ENCODE measurements at regions of chr17 and their contacts with region 1.

Region 1: DNA sequence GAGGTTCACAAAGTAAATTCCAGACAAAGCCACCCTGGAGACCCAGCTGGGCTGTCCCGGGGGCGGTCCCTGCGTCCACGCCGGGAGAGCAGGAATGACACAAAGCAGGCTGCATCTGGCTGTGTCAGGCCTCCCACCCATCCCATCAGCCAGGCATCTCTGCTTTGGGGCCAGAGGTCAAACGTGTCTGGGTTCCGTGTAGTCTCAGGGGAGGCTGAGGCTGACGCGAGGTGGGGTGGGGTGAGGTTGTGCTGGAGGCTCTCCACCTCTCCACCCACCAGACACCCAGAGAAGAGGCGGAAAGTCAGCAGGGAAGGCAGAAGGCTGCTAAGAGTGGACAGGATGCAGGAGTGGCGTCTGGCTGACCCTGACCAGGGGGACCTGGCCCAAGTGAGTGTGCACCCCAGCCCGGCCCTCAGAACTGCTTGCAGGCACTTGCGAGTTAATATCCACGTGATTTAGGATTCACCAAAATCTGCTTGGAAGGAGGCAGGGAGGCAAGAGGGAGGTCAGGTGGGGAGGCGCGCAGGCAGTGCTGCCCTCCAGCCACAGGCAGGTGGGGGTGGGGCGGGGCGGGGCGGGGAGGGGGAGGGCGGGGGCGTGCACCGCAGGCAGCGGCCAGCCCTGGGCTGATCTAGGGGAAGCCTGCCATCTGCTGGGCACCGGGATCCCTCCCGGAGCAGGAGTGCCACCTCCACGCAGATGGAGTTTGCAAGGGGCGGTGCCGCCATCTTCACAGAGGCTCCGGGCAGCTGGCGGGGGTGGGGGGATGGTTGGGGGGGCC is 44.3 kb downstream of the TBC1D16 start:
- DNase-seq: peak; percentile 79 to 81 (median 80)
- H3K4me3 ChIP-seq: peak overlapping the region in 1 of 2 donors; percentile 62
- H3K4me3 Mint-ChIP-seq: peak overlapping the region; percentile 48 to 88 (median 78)
- H3K27ac ChIP-seq: no peak overlapping the region
- H3K27ac Mint-ChIP-seq: peak overlapping the region in 2 of 7 donors; percentile 74 to 85
- H3K4me1 ChIP-seq: peaks cover 34% of the 10 kb centered on the region
- H3K4me1 Mint-ChIP-seq: peaks cover 15 to 45% (median 32%) of the 10 kb centered on the region in 4 donors
- H3K27me3 ChIP-seq: no peaks in the 10 kb centered on the region
- H3K27me3 Mint-ChIP-seq: no peaks in the 10 kb centered on the region

Region 2: DNA sequence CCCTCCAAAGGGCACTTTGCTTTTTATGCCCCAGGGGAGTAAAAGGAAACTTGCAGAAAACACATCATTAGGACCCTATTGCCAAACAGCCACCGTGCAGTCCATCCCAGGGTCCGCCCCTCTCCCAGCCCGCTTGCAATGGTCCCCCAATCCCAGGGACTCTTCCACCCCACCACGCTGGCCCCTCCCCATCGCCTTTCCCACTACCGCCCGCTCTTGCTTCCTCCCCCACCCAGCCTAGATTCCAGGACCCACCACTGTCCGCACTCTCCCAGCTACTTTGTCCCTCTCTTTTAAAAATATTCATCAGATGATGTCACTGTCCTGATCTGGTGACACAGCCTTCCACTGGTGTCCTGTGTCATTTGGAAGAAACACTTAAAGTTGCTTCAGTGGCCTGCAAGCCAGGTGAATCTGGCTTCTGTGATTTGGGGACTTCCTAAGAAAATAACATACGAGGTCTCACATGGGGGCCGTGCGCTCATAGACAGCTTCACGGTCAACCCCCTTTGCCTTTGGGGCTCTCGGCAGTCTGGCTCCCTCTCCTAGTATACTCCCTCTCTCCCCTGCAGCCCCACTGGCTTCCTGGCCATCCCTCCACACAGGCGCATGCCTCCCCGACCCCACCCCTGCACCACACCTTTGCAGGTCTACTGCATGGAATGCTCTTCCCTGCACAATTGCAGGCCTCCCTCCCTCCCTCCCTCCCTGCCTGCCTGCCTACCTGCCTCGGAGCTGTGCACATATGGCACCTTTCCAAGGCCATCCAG is 508.4 kb before region 1 on chr17:
- CTCF ChIA-PET with region 1: no interaction called
- POLR2A ChIA-PET with region 1: no interaction called
- intact Hi-C with region 1: no loop called
- DNase-seq: no peak
- H3K4me3 ChIP-seq: no peak overlapping the region
- H3K4me3 Mint-ChIP-seq: no peak overlapping the region
- H3K27ac ChIP-seq: no peak overlapping the region
- H3K27ac Mint-ChIP-seq: no peak overlapping the region
- H3K4me1 ChIP-seq: no peaks in the 10 kb centered on the region
- H3K4me1 Mint-ChIP-seq: no peaks in the 10 kb centered on the region
- H3K27me3 ChIP-seq: no peaks in the 10 kb centered on the region
- H3K27me3 Mint-ChIP-seq: peaks cover 37 to 50% of the 10 kb centered on the region in 2 donors

Region 3: DNA sequence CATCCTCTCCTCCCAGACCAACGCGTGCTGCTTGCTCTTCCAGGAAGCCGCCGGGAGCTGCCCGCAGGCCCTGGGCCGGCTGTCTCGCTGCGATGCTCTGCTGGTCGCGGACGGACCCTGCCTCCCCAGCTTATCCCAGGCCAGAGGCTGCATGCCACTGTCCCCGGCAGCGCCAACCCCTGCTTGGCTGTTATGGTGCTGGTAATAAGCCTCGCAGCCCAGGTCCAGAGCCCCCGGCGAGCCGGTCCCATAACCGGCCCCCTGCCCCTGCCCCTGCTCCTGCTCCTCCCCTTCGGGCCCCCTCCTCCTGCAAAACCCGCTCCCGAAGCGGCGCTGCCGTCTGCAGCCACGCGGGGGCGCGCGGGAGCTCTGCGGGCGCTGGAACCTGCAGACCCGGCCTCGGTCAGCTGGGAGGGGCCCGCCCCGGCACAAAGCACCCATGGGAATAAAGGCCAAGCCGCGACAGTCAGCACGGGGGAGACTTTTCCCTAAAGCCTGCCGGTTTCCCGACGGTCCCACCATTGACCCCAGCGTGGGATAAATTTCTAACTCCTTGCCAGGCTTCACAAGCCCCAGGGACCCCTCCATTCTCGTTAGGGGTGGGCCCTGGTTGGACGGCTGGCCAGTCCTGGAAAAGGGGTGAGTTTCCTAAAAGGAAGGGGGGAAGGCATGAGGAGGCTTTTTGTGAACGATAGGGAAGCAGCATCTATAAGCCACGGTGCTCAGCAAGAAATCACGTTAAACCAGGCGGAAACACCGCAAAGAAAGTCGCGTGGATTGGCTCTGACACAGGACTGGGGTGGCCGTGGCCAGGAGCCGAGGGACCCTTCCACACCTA is 249.4 kb before region 1 on chr17:
- CTCF ChIA-PET with region 1: interaction called, 18 read pairs
- POLR2A ChIA-PET with region 1: no interaction called
- intact Hi-C with region 1: loop called (anchors 1 kb)
- DNase-seq: peak in 4 of 5 donors; percentile 65 to 76 (median 67)
- H3K4me3 ChIP-seq: no peak overlapping the region
- H3K4me3 Mint-ChIP-seq: peak overlapping the region in 1 of 8 donors; percentile 26
- H3K27ac ChIP-seq: no peak overlapping the region
- H3K27ac Mint-ChIP-seq: peak overlapping the region in 1 of 7 donors; percentile 13
- H3K4me1 ChIP-seq: peaks cover 16% of the 10 kb centered on the region
- H3K4me1 Mint-ChIP-seq: peaks cover 4 to 19% (median 9%) of the 10 kb centered on the region in 4 donors
- H3K27me3 ChIP-seq: peaks cover 13% of the 10 kb centered on the region
- H3K27me3 Mint-ChIP-seq: peaks cover 24 to 33% of the 10 kb centered on the region in 2 donors

Region 4: DNA sequence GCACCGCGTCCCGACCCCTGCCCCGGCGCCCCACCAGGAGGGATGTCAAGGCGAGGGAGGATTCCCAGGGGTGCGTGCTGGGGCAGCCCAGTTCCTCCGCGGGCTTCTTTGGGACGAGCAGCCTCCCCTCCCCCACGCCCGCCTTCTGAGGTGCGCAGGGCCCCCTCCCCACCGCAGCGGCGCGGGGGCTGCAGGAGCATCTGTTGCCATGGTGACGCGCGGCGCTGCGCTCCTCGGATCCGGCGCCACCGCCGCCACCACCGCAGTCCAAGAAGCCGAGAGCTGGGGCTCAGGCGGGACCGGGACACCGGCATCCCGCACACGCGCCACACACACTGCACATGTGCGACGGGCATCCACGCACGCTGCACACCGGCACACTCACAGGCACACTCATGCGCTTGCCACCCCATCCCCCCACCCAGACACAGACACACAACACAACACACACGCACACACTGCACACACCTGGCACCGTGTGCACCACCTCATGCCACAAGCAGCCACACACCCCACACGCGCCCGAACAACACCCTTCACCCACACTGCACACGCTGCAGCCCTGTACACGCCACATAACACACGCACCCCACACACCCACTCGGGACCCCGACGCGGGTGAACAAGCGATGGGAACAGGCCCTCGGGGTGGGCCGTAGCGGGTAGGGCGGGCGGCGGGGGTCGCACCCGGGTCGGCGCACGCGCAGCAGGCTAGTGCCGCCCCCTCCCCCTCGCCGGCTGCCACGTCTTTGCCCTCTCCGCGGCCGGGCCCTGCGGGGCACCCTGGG is 243.6 kb before region 1 on chr17:
- CTCF ChIA-PET with region 1: interaction called, 18 read pairs
- POLR2A ChIA-PET with region 1: no interaction called
- intact Hi-C with region 1: loop called (anchors 1 kb)
- DNase-seq: no peak
- H3K4me3 ChIP-seq: no peak overlapping the region
- H3K4me3 Mint-ChIP-seq: peak overlapping the region in 6 of 8 donors; percentile 12 to 75 (median 58)
- H3K27ac ChIP-seq: no peak overlapping the region
- H3K27ac Mint-ChIP-seq: no peak overlapping the region
- H3K4me1 ChIP-seq: peaks cover 21% of the 10 kb centered on the region
- H3K4me1 Mint-ChIP-seq: peaks cover 7 to 27% (median 12%) of the 10 kb centered on the region in 4 donors
- H3K27me3 ChIP-seq: peaks cover 16% of the 10 kb centered on the region
- H3K27me3 Mint-ChIP-seq: peaks cover 25 to 38% of the 10 kb centered on the region in 2 donors

Region 5: DNA sequence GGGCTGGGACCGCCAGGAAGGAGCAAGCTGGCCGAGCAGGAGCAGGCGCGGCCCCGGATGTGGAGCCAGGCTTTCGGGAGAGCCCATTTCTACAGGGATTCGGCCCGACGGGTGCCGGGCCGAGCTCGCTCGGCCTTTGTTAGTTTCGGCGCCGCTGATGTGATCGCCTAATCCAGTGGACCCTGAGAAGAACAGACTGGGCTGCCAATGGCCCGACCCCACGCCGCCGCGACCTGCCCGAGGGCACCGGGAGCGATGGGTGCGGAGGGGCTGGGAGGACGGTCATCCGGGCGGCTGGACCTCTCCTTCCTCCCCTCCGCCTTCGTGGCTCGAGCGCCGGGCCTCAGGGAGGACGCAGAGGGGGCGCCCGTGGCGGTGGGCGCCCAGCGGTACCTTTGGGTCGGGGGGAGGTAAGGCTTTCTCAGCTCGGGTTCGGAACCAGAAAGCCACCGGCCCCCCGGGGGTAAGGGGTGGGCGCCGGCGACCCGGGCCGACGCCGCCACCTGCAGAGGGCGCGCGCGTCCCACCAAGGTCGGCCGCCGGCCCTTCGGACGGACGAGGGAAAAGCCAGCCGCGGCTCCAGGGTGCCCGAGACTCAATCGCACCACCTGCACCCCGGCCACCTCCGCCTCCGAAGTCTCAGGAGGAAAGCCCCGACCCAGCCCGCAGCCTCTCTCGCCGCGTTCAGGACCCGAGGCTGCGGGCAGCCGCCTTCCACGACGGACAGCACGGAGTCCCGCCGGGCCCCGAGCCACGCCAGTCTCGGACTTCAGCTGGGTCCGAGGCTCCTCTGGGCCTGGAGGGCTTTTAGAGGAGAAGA is 201.6 kb before region 1 on chr17:
- CTCF ChIA-PET with region 1: interaction called, 8 read pairs
- POLR2A ChIA-PET with region 1: no interaction called
- intact Hi-C with region 1: loop called (anchors 1 kb)
- DNase-seq: no peak
- H3K4me3 ChIP-seq: no peak overlapping the region
- H3K4me3 Mint-ChIP-seq: peak overlapping the region in 2 of 8 donors; percentile 10 to 36
- H3K27ac ChIP-seq: no peak overlapping the region
- H3K27ac Mint-ChIP-seq: peak overlapping the region in 1 of 7 donors; percentile 63
- H3K4me1 ChIP-seq: peaks cover 25% of the 10 kb centered on the region
- H3K4me1 Mint-ChIP-seq: peaks cover 2 to 16% (median 7%) of the 10 kb centered on the region in 4 donors
- H3K27me3 ChIP-seq: peaks cover 23% of the 10 kb centered on the region
- H3K27me3 Mint-ChIP-seq: peaks cover 29 to 41% of the 10 kb centered on the region in 2 donors

Region 6: DNA sequence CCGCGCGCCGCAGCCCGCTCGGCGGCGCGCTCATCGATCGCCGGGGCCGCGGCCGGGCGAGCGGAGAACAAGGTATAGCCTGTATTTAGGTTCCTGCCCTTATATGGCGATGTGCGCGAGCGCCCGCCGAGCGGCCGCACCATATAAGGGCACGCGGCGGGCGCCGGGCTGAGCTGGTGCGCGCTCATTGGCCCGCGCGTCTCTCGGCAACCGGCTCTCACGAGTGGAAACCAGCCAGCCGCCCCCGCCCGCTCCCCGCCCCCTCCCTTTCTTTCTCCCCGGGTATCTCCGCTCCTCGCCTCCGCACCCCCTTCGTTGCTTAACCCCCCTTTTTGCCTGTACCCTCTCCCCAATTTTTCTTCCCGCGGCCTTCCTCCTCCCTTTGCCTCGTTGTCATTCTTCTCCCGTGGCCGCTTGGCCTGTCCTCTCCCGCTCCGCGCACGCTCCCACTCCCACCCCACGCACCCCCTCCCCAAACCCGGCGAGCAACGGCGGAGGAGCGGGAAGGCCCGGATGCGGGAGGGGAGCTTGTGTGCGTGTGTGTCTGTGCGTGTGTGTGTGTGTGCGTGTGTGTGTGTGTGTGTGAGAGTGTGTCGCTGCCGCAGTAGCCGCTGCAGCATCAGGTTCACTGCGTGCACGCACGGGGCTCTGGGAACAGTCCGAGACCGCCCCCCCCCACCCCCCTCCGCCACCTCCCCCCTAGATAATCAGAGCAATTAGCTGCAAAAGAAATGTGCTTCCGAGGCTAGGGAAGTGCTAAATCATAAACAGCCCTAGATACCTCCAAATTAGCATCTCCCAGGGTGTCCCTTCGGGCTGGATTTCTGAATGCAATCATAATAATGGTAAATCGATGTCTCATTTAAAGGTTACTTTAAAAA is 181.0 kb before region 1 on chr17:
- CTCF ChIA-PET with region 1: interaction called, 5 read pairs
- POLR2A ChIA-PET with region 1: no interaction called
- intact Hi-C with region 1: loop called (anchors 5 kb)
- DNase-seq: peak; percentile 68 to 84 (median 75)
- H3K4me3 ChIP-seq: peak overlapping the region in 1 of 2 donors; percentile 35
- H3K4me3 Mint-ChIP-seq: peak overlapping the region in 6 of 8 donors; percentile 27 to 77 (median 51)
- H3K27ac ChIP-seq: no peak overlapping the region
- H3K27ac Mint-ChIP-seq: peak overlapping the region in 4 of 7 donors; percentile 51 to 88 (median 78)
- H3K4me1 ChIP-seq: peaks cover 47% of the 10 kb centered on the region
- H3K4me1 Mint-ChIP-seq: peaks cover 14 to 44% (median 25%) of the 10 kb centered on the region in 4 donors
- H3K27me3 ChIP-seq: peaks cover 69% of the 10 kb centered on the region
- H3K27me3 Mint-ChIP-seq: peaks cover 50 to 56% of the 10 kb centered on the region in 2 donors

Region 7: GRCh38 chr17:79960788-79961522 is 30.4 kb before region 1 on chr17:
- CTCF ChIA-PET with region 1: no interaction called
- POLR2A ChIA-PET with region 1: no interaction called
- intact Hi-C with region 1: no loop called
- DNase-seq: no peak
- H3K4me3 ChIP-seq: no peak overlapping the region
- H3K4me3 Mint-ChIP-seq: no peak overlapping the region
- H3K27ac ChIP-seq: no peak overlapping the region
- H3K27ac Mint-ChIP-seq: no peak overlapping the region
- H3K4me1 ChIP-seq: no peaks in the 10 kb centered on the region
- H3K4me1 Mint-ChIP-seq: peaks cover 0 to 6% (median 5%) of the 10 kb centered on the region in 4 donors
- H3K27me3 ChIP-seq: no peaks in the 10 kb centered on the region
- H3K27me3 Mint-ChIP-seq: peaks cover 15 to 17% of the 10 kb centered on the region in 2 donors

Region 8: GRCh38 chr17:80008383-80008840 is 17.1 kb after region 1 on chr17:
- CTCF ChIA-PET with region 1: interaction called, 41 read pairs
- POLR2A ChIA-PET with region 1: interaction called, 12 read pairs
- intact Hi-C with region 1: no loop called
- DNase-seq: peak; percentile 54 to 72 (median 62)
- H3K4me3 ChIP-seq: no peak overlapping the region
- H3K4me3 Mint-ChIP-seq: peak overlapping the region in 1 of 8 donors; percentile 6
- H3K27ac ChIP-seq: no peak overlapping the region
- H3K27ac Mint-ChIP-seq: no peak overlapping the region
- H3K4me1 ChIP-seq: peaks cover 6% of the 10 kb centered on the region
- H3K4me1 Mint-ChIP-seq: peaks cover 1 to 14% (median 6%) of the 10 kb centered on the region in 4 donors
- H3K27me3 ChIP-seq: no peaks in the 10 kb centered on the region
- H3K27me3 Mint-ChIP-seq: no peaks in the 10 kb centered on the region

Region 9: GRCh38 chr17:80316927-80317702 is 325.8 kb after region 1 on chr17:
- CTCF ChIA-PET with region 1: no interaction called
- POLR2A ChIA-PET with region 1: no interaction called
- intact Hi-C with region 1: no loop called
- DNase-seq: no peak
- H3K4me3 ChIP-seq: no peak overlapping the region
- H3K4me3 Mint-ChIP-seq: no peak overlapping the region
- H3K27ac ChIP-seq: no peak overlapping the region
- H3K27ac Mint-ChIP-seq: no peak overlapping the region
- H3K4me1 ChIP-seq: no peaks in the 10 kb centered on the region
- H3K4me1 Mint-ChIP-seq: peaks cover 0 to 7% (median 3%) of the 10 kb centered on the region in 4 donors
- H3K27me3 ChIP-seq: no peaks in the 10 kb centered on the region
- H3K27me3 Mint-ChIP-seq: no peaks in the 10 kb centered on the region

Measured in CD4-positive, alpha-beta memory T cell (primary cell).